ENCODE measurements at regions of chr7 and their contacts with region 1.

Region 1: DNA sequence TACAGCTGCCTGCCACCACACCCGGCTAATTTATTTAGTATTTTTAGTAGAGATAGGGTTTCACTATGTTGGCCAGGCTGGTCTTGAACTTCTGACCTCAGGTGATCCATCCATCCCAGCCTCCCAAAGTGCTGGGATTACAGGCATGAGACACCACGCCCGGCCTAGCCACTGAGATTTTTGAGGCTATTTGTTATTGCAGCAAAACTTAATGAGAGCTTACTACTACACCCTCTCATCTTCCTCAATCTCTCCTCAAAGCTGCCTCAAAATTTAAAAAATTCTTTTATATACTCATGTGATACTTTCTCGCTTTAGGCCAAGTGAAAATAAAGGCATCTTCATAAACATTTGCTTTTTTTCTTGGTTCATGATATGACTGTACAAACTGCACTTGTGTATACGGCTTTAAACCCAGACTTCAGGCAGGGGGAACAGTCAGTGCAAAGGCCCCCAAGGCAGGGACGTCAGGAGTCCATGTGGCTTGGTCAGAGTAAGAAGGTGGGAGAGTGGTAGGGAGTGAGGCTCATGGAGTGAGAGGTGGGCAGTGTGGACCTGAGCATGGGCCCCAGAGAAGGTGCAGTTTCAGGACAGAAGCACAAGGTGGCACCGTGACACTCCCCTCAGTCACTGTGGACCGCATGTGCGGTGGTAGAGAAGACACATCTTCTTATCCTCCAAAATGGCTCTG is 55.5 kb downstream of the SYPL1 start:
- DNase-seq: peak; percentile 62 to 72 (median 69)
- H3K4me3 ChIP-seq: no peak overlapping the region
- H3K4me3 Mint-ChIP-seq: peak overlapping the region in 3 of 8 donors; percentile 15 to 49 (median 17)
- H3K27ac ChIP-seq: no peak overlapping the region
- H3K27ac Mint-ChIP-seq: peak overlapping the region in 2 of 7 donors; percentile 12 to 54
- H3K4me1 ChIP-seq: peaks cover 16% of the 10 kb centered on the region
- H3K4me1 Mint-ChIP-seq: peaks cover 8 to 21% (median 13%) of the 10 kb centered on the region in 4 donors
- H3K27me3 ChIP-seq: no peaks in the 10 kb centered on the region
- H3K27me3 Mint-ChIP-seq: peaks cover 0 to 4% of the 10 kb centered on the region in 2 donors

Region 2: GRCh38 chr7:104923010-104923421 is 1133.6 kb before region 1 on chr7:
- CTCF ChIA-PET with region 1: no interaction called
- POLR2A ChIA-PET with region 1: no interaction called
- intact Hi-C with region 1: no loop called
- DNase-seq: peak; percentile 63 to 79 (median 67)
- H3K4me3 ChIP-seq: no peak overlapping the region
- H3K4me3 Mint-ChIP-seq: no peak overlapping the region
- H3K27ac ChIP-seq: no peak overlapping the region
- H3K27ac Mint-ChIP-seq: peak overlapping the region in 5 of 7 donors; percentile 42 to 83 (median 62)
- H3K4me1 ChIP-seq: peaks cover 6% of the 10 kb centered on the region
- H3K4me1 Mint-ChIP-seq: peaks cover 0 to 6% (median 4%) of the 10 kb centered on the region in 4 donors
- H3K27me3 ChIP-seq: no peaks in the 10 kb centered on the region
- H3K27me3 Mint-ChIP-seq: no peaks in the 10 kb centered on the region

Region 3: DNA sequence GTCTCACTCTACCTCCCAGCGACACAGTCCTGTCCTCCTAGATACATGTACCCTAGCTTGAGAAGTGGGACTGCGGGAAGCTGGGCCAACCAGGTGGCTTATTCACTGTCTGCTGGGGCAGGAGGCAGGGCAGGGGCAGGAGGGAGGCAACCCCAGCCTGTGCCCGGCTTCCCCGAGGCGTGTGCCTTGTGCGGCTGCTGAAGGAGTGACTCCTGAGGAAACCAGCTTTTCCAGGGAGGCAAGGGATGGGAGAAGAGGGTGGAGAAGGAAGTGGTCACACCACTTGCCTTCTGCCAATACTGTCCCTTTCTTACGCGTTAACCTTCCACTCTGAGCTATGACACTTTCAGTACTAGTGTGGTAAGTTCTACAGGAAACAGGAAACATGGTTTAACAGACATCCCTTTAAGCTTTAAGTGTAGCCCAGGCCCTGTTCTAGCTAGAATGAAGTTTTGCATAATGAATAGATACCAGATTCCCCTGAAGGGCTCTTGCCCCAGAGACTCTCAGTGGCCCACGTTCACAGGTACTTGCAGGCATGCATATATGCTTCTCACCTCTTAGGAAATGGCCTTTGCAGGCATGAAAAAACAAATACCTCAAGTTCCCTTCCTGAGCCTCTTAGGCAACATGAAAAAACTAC is 14.8 kb after region 1 on chr7:
- CTCF ChIA-PET with region 1: interaction called, 43 read pairs
- POLR2A ChIA-PET with region 1: interaction called, 25 read pairs
- intact Hi-C with region 1: loop called (anchors 1 kb)
- DNase-seq: peak; percentile 54 to 69 (median 63)
- H3K4me3 ChIP-seq: peak overlapping the region in 1 of 2 donors; percentile 49
- H3K4me3 Mint-ChIP-seq: peak overlapping the region; percentile 73 to 86 (median 82)
- H3K27ac ChIP-seq: peak overlapping the region; percentile 52
- H3K27ac Mint-ChIP-seq: peak overlapping the region; percentile 86 to 95 (median 94)
- H3K4me1 ChIP-seq: peaks cover 43% of the 10 kb centered on the region
- H3K4me1 Mint-ChIP-seq: peaks cover 28 to 62% (median 42%) of the 10 kb centered on the region in 4 donors
- H3K27me3 ChIP-seq: no peaks in the 10 kb centered on the region
- H3K27me3 Mint-ChIP-seq: no peaks in the 10 kb centered on the region

Region 4: DNA sequence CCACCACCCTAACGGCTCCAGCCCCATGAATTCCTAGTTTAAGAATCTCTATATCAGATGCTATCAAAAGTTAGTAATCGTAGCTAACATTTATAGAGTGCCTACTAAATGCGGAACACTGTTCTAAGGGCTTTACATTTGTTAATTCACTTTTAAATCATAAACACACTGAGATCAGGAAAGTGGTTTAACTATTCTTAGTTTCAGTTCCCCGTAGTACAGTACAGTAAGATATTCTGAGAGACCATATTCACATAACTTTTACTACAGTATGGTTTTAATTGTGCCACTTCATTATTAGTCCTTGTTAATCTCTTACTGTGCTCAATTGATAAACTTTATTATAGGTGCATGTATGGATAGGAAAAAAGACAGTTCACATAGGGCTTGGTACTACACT is 33.0 kb after region 1 on chr7:
- CTCF ChIA-PET with region 1: interaction called, 3 read pairs
- POLR2A ChIA-PET with region 1: no interaction called
- intact Hi-C with region 1: loop called (anchors 5 kb)
- DNase-seq: no peak
- H3K4me3 ChIP-seq: no peak overlapping the region
- H3K4me3 Mint-ChIP-seq: no peak overlapping the region
- H3K27ac ChIP-seq: no peak overlapping the region
- H3K27ac Mint-ChIP-seq: peak overlapping the region in 3 of 7 donors; percentile 4 to 74 (median 63)
- H3K4me1 ChIP-seq: no peaks in the 10 kb centered on the region
- H3K4me1 Mint-ChIP-seq: peaks cover 0 to 4% (median 2%) of the 10 kb centered on the region in 4 donors
- H3K27me3 ChIP-seq: no peaks in the 10 kb centered on the region
- H3K27me3 Mint-ChIP-seq: no peaks in the 10 kb centered on the region

Region 5: GRCh38 chr7:106126170-106126938 is 69.7 kb after region 1 on chr7:
- CTCF ChIA-PET with region 1: interaction called, 18 read pairs
- POLR2A ChIA-PET with region 1: interaction called, 3 read pairs
- intact Hi-C with region 1: no loop called
- DNase-seq: peak; percentile 45 to 62 (median 48)
- H3K4me3 ChIP-seq: no peak overlapping the region
- H3K4me3 Mint-ChIP-seq: peak overlapping the region in 6 of 8 donors; percentile 52 to 73 (median 62)
- H3K27ac ChIP-seq: no peak overlapping the region
- H3K27ac Mint-ChIP-seq: peak overlapping the region in 3 of 7 donors; percentile 5 to 72 (median 43)
- H3K4me1 ChIP-seq: peaks cover 8% of the 10 kb centered on the region
- H3K4me1 Mint-ChIP-seq: peaks cover 6 to 14% (median 9%) of the 10 kb centered on the region in 4 donors
- H3K27me3 ChIP-seq: no peaks in the 10 kb centered on the region
- H3K27me3 Mint-ChIP-seq: peaks cover 9 to 10% of the 10 kb centered on the region in 2 donors

Region 6: GRCh38 chr7:106153891-106154449 is 97.3 kb after region 1 on chr7:
- CTCF ChIA-PET with region 1: interaction called, 423 read pairs
- POLR2A ChIA-PET with region 1: interaction called, 7 read pairs
- intact Hi-C with region 1: loop called (anchors 1 kb)
- DNase-seq: peak; percentile 59 to 74 (median 65)
- H3K4me3 ChIP-seq: no peak overlapping the region
- H3K4me3 Mint-ChIP-seq: no peak overlapping the region
- H3K27ac ChIP-seq: no peak overlapping the region
- H3K27ac Mint-ChIP-seq: peak overlapping the region in 1 of 7 donors; percentile 80
- H3K4me1 ChIP-seq: no peaks in the 10 kb centered on the region
- H3K4me1 Mint-ChIP-seq: peaks cover 0 to 9% (median 3%) of the 10 kb centered on the region in 4 donors
- H3K27me3 ChIP-seq: peaks cover 3% of the 10 kb centered on the region
- H3K27me3 Mint-ChIP-seq: peaks cover 11 to 19% of the 10 kb centered on the region in 2 donors

Region 7: DNA sequence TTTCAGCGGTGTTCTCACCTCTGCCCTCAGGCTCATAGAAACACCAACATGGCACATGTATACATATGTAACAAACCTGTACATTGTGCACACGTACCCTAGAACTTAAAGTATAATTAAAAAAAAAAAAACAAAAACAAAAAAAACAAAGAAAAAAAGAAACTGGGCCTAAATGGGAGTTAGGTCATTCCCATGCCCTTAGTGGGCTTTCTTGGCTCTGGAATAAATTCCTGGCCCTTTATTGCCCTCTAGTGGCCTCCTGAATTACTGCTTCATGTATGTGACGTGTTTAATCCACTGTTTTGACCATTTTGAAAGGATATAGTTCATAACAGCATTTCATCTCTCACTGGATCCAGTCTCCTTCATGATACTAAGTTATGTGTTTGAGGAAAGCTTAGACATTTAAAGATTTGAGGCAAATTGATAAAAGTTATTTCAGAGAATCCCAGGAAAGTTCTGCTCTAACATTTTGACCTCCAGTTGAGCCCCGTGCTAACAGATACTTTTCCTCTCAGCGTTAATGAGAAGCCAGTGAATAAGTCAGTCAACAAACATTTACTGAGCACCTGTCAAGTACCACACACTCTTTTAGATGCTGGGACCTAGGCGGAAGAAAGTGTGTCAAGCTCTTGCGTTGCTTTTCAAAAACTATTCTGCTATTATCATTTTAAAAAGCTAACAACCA is 110.1 kb after region 1 on chr7:
- CTCF ChIA-PET with region 1: interaction called, 423 read pairs
- POLR2A ChIA-PET with region 1: no interaction called
- intact Hi-C with region 1: loop called (anchors 1 kb)
- DNase-seq: peak in 4 of 5 donors; percentile 33 to 41 (median 36)
- H3K4me3 ChIP-seq: no peak overlapping the region
- H3K4me3 Mint-ChIP-seq: no peak overlapping the region
- H3K27ac ChIP-seq: no peak overlapping the region
- H3K27ac Mint-ChIP-seq: peak overlapping the region in 1 of 7 donors; percentile 39
- H3K4me1 ChIP-seq: no peaks in the 10 kb centered on the region
- H3K4me1 Mint-ChIP-seq: no peaks in the 10 kb centered on the region
- H3K27me3 ChIP-seq: no peaks in the 10 kb centered on the region
- H3K27me3 Mint-ChIP-seq: peaks cover 6 to 7% of the 10 kb centered on the region in 2 donors

Region 8: GRCh38 chr7:106461993-106462859 is 405.6 kb after region 1 on chr7:
- CTCF ChIA-PET with region 1: no interaction called
- POLR2A ChIA-PET with region 1: no interaction called
- intact Hi-C with region 1: loop called (anchors 10 kb)
- DNase-seq: peak in 4 of 5 donors; percentile 15 to 33 (median 24)
- H3K4me3 ChIP-seq: no peak overlapping the region
- H3K4me3 Mint-ChIP-seq: no peak overlapping the region
- H3K27ac ChIP-seq: no peak overlapping the region
- H3K27ac Mint-ChIP-seq: no peak overlapping the region
- H3K4me1 ChIP-seq: no peaks in the 10 kb centered on the region
- H3K4me1 Mint-ChIP-seq: peaks cover 0 to 2% (median 0%) of the 10 kb centered on the region in 4 donors
- H3K27me3 ChIP-seq: no peaks in the 10 kb centered on the region
- H3K27me3 Mint-ChIP-seq: no peaks in the 10 kb centered on the region

Measured in CD4-positive, alpha-beta memory T cell (primary cell).